MCF 10A (cell line): ENCODE measurements at regions of chr11 and their contacts with region 1.

Region 1: GRCh38 chr11:97140885-97141494 is 751.2 kb downstream of the JRKL start:
- DNase-seq: peak; percentile 46
- H3K4me3 Mint-ChIP-seq: no peak overlapping the region
- H3K27ac Mint-ChIP-seq: no peak overlapping the region
- H3K4me1 Mint-ChIP-seq: no peaks in the 10 kb centered on the region
- H3K27me3 Mint-ChIP-seq: peaks cover 57% of the 10 kb centered on the region
- CTCF ChIP-seq: peak; percentile 56

Region 2: DNA sequence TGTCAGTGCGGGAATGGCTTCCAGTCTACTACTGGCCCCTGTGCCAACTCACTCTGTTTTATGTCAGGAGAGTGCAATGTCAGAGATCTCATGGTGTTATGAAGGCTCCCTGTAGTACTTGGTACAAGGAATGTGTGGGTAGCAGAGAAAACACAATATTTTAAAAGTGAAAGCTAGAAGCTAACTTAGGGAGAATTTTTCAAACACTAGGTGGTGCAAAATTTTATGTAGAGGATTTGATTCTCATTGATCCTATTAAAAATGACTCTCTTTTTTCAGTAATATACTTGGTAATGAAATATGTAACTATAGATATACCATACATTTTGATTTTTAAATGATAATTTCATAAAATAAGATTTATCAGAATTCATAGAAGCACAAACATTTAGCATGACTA is 616.5 kb before region 1 on chr11:
- CTCF ChIA-PET with region 1: interaction called, 6 read pairs
- POLR2A ChIA-PET with region 1: no interaction called
- intact Hi-C with region 1: loop called (anchors 2 kb)
- DNase-seq: no peak
- H3K4me3 Mint-ChIP-seq: no peak overlapping the region
- H3K27ac Mint-ChIP-seq: no peak overlapping the region
- H3K4me1 Mint-ChIP-seq: peaks cover 6% of the 10 kb centered on the region
- H3K27me3 Mint-ChIP-seq: peaks cover 48% of the 10 kb centered on the region
- CTCF ChIP-seq: no peak